GM12878 (cell line): ENCODE measurements at regions of chr6 and their contacts with region 1.

Region 1: DNA sequence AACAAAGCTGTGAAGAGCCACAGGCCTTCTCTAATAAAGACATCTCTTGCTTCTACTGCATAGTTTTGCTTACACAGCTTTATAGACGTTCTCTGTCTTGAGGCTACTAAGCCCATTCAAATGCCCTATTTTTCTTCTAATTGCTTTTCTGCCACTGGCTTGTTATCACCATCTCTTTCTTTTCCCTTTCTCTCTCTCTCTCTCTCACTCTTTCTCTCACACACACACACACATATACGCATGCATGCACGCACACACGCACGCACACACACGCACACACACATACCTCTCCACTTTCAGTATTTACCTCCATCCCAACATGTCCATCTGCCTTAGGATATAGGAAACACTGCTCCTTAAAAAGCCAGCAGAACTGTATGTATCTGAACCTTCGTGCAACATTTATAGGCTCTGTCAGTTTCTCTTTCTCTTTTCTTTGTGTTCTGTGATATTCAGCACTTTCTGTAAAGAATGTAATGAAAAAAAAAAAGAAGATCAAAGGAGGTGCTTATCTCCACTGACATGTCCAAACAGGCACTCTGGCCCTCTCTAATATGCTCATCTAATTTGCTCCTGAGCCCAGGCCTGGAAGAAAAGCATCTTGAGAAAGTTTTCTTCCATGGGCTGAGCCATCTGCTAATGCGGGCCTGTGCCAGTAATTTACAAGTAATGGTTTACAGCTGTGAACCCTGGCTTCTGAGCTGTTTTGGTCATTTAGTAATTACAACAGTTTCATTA is 1046.7 kb upstream of the MAP3K7 start:
- DNase-seq: no peak
- ATAC-seq: peak; percentile 69
- H3K4me3 ChIP-seq: no peak overlapping the region
- H3K27ac ChIP-seq: no peak overlapping the region
- H3K4me1 ChIP-seq: no peaks in the 10 kb centered on the region
- H3K27me3 ChIP-seq: no peaks in the 10 kb centered on the region
- CTCF ChIP-seq: no peak
- EP300 ChIP-seq: no peak
- POLR2A ChIP-seq: no peak
- RAD21 ChIP-seq: no peak

Region 2: DNA sequence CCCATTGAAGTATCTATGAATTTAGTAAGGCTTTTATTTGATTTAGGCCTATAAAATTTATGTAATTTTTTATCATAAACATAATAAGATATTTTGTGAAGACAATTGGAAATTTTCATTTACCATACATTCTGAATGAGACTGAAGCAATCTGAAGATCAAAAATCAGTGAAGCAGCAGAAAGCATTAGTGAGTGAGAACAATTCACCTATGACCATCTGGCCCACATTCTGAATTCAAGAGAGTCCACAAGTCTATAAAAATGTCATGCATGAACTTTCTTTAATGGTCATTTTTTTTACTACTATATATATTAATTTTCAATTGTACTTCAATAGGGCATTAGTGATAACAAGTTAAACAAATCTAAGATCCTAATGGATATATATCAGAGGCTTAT is 20.1 kb before region 1 on chr6:
- CTCF ChIA-PET with region 1: interaction called, 3 read pairs
- POLR2A ChIA-PET with region 1: no interaction called
- RAD21 ChIA-PET with region 1: interaction called, 3 read pairs
- SMC1A ChIA-PET with region 1: interaction called, 20 read pairs
- in situ Hi-C with region 1: no loop called
- intact Hi-C with region 1: no loop called
- DNase-seq: no peak
- ATAC-seq: no peak
- H3K4me3 ChIP-seq: no peak overlapping the region
- H3K27ac ChIP-seq: no peak overlapping the region
- H3K4me1 ChIP-seq: no peaks in the 10 kb centered on the region
- H3K27me3 ChIP-seq: no peaks in the 10 kb centered on the region
- CTCF ChIP-seq: no peak
- EP300 ChIP-seq: no peak
- POLR2A ChIP-seq: no peak
- RAD21 ChIP-seq: no peak

Region 3: DNA sequence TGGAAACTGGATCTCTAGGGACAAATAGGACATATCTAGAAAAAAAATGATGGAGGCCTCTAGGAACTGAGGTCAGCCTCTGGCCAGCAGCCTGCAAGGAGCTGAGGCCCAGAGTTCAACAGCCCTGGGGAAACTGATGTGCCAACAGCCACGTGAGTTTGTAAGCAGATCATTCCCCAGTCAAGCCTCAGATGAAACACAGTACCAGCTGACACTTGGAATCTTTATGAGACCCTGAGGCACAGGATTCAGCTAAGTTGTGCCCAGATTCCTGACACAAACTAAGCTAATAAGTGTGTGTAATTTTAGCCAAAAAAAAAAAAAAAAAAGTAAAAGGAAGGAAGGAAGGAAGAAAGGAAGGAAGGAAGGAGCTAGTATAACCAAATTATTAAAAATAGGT is 13.1 kb after region 1 on chr6:
- CTCF ChIA-PET with region 1: interaction called, 3 read pairs
- POLR2A ChIA-PET with region 1: interaction called, 5 read pairs
- RAD21 ChIA-PET with region 1: interaction called, 3 read pairs
- SMC1A ChIA-PET with region 1: interaction called, 38 read pairs
- in situ Hi-C with region 1: no loop called
- intact Hi-C with region 1: no loop called
- DNase-seq: no peak
- ATAC-seq: no peak
- H3K4me3 ChIP-seq: no peak overlapping the region
- H3K27ac ChIP-seq: no peak overlapping the region
- H3K4me1 ChIP-seq: no peaks in the 10 kb centered on the region
- H3K27me3 ChIP-seq: no peaks in the 10 kb centered on the region; a peak in 1 of 4 replicates
- CTCF ChIP-seq: no peak
- EP300 ChIP-seq: no peak
- POLR2A ChIP-seq: no peak
- RAD21 ChIP-seq: no peak